SK-N-SH (cell line): ENCODE measurements at regions of chr7 and their contacts with region 1.

Region 1: DNA sequence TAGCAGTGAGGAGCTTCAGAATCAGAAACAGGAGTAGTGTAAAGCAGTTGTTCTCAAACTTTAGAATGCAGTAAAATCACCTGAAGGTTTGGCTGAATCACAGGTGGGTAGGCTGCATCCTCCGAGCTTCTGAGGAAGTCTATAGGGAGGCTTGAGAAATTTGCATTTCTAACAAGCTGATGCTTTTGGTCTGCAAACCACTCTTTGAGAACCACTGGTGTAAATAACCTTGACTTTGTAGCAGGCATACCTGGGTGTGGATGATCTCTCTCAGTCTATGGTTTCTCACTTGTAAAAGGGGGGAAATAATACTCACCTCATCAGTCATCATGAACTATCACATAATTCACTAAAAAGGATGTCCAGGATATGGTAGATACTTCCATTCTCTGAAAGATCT is 118.1 kb downstream of the SRI start:
- DNase-seq: no peak
- H3K4me3 ChIP-seq: no peak overlapping the region
- H3K27ac ChIP-seq: no peak overlapping the region; a peak in 1 of 4 replicates
- H3K4me1 ChIP-seq: no peaks in the 10 kb centered on the region; a peak in 1 of 4 replicates
- H3K27me3 ChIP-seq: no peaks in the 10 kb centered on the region
- CTCF ChIP-seq: no peak
- EP300 ChIP-seq: no peak
- RAD21 ChIP-seq: no peak

Region 2: DNA sequence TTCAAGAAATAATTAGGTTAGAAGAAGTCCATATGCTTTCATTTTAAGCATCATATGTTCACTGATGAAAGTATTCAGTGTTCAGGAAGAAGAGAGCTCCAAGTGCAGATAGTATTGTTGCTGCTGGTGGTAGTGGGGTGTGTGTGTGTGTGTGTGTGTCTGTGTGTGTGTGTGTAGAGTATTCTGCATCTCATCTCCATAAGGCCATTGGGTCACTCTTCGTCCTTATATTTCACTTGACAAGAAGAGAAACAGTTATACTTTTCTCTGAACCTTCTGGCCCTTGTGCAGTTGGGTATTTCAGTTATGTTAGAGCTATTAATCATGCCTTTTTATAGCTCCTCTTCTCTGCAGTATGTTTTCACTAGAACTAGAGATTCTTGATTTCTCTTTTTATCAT is 141.5 kb before region 1 on chr7:
- CTCF ChIA-PET with region 1: no interaction called
- POLR2A ChIA-PET with region 1: no interaction called
- DNase-seq: no peak
- H3K4me3 ChIP-seq: no peak overlapping the region
- H3K27ac ChIP-seq: no peak overlapping the region
- H3K4me1 ChIP-seq: peaks cover 0 to 3% of the 10 kb centered on the region in 2 experiments; a peak in 2 of 4 replicates
- H3K27me3 ChIP-seq: no peaks in the 10 kb centered on the region
- CTCF ChIP-seq: no peak
- EP300 ChIP-seq: no peak
- RAD21 ChIP-seq: no peak

Region 3: DNA sequence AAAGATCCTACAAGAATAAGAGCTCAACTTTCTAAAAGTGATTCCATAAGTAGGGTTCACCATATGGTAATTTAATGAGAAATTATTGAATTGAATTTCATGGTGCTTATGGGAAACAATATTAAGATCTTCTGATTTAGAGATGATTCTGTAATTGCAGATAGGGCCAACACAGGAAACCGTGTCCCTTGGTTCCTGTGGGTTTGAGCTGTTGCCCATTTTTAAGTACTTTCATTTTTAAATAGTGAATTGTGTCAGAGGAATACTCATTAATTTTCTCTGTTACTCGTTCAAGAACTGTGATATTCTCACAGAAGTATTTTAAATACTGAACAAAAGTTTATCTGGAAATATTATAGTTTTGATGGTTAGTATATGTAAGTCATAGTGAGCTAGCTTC is 11.1 kb before region 1 on chr7:
- CTCF ChIA-PET with region 1: interaction called, 12 read pairs
- POLR2A ChIA-PET with region 1: no interaction called
- DNase-seq: no peak
- H3K4me3 ChIP-seq: no peak overlapping the region
- H3K27ac ChIP-seq: peak overlapping the region in 1 of 2 experiments; percentile 39; a peak in 1 of 4 replicates
- H3K4me1 ChIP-seq: peaks cover 0 to 38% of the 10 kb centered on the region in 2 experiments; a peak in 2 of 4 replicates
- H3K27me3 ChIP-seq: no peaks in the 10 kb centered on the region
- CTCF ChIP-seq: no peak
- EP300 ChIP-seq: peak in 1 of 2 experiments; percentile 33; a peak in 1 of 4 replicates
- RAD21 ChIP-seq: no peak